Psoas muscle (tissue), 8 donors: ENCODE measurements at regions of chr12 and their contacts with region 1.

Region 1: GRCh38 chr12:5648692-5649359 is 216.9 kb downstream of the NTF3 start:
- DNase-seq: no peak
- ATAC-seq: no peak
- H3K4me3 ChIP-seq: no peak overlapping the region
- H3K27ac ChIP-seq: no peak overlapping the region
- H3K4me1 ChIP-seq: no peaks in the 10 kb centered on the region
- H3K27me3 ChIP-seq: peaks cover 0 to 16% (median 0%) of the 10 kb centered on the region in 3 donors
- CTCF ChIP-seq: peak; percentile 32

Region 2: GRCh38 chr12:5428332-5429221 is 220.2 kb before region 1 on chr12:
- intact Hi-C with region 1: loop called in 1 of 2 experiments (anchors 5 kb)
- DNase-seq: no peak
- ATAC-seq: no peak
- H3K4me3 ChIP-seq: no peak overlapping the region
- H3K27ac ChIP-seq: no peak overlapping the region
- H3K4me1 ChIP-seq: peaks cover 17% of the 10 kb centered on the region
- H3K27me3 ChIP-seq: peaks cover 0 to 48% (median 6%) of the 10 kb centered on the region in 3 donors
- CTCF ChIP-seq: peak; percentile 28

Region 3: GRCh38 chr12:6335451-6336078 is 686.7 kb after region 1 on chr12:
- intact Hi-C with region 1: no loop called
- DNase-seq: peak; percentile 84 to 86
- ATAC-seq: peak; percentile 59 to 70 (median 62)
- H3K4me3 ChIP-seq: peak overlapping the region; percentile 99
- H3K27ac ChIP-seq: peak overlapping the region; percentile 88
- H3K4me1 ChIP-seq: peaks cover 56% of the 10 kb centered on the region
- H3K27me3 ChIP-seq: no peaks in the 10 kb centered on the region
- CTCF ChIP-seq: peak; percentile 42